HEK293 (cell line): ENCODE measurements at regions of chr4 and their contacts with region 1.

Region 1: GRCh38 chr4:77433418-77433733 is 172.2 kb upstream of the CXCL13 start:
- H3K4me3 ChIP-seq: no peak overlapping the region
- H3K27ac ChIP-seq: no peak overlapping the region
- H3K4me1 ChIP-seq: no peaks in the 10 kb centered on the region
- CTCF ChIP-seq: no peak

Region 2: GRCh38 chr4:77367638-77368037 is 65.7 kb before region 1 on chr4:
- CTCF ChIA-PET with region 1: interaction called, 38 read pairs
- POLR2A ChIA-PET with region 1: no interaction called
- H3K4me3 ChIP-seq: no peak overlapping the region
- H3K27ac ChIP-seq: no peak overlapping the region
- H3K4me1 ChIP-seq: no peaks in the 10 kb centered on the region
- CTCF ChIP-seq: no peak

Region 3: GRCh38 chr4:77385124-77385969 is 48.0 kb before region 1 on chr4:
- CTCF ChIA-PET with region 1: interaction called, 63 read pairs
- POLR2A ChIA-PET with region 1: no interaction called
- H3K4me3 ChIP-seq: no peak overlapping the region
- H3K27ac ChIP-seq: no peak overlapping the region
- H3K4me1 ChIP-seq: no peaks in the 10 kb centered on the region
- CTCF ChIP-seq: peak; percentile 58

Region 4: DNA sequence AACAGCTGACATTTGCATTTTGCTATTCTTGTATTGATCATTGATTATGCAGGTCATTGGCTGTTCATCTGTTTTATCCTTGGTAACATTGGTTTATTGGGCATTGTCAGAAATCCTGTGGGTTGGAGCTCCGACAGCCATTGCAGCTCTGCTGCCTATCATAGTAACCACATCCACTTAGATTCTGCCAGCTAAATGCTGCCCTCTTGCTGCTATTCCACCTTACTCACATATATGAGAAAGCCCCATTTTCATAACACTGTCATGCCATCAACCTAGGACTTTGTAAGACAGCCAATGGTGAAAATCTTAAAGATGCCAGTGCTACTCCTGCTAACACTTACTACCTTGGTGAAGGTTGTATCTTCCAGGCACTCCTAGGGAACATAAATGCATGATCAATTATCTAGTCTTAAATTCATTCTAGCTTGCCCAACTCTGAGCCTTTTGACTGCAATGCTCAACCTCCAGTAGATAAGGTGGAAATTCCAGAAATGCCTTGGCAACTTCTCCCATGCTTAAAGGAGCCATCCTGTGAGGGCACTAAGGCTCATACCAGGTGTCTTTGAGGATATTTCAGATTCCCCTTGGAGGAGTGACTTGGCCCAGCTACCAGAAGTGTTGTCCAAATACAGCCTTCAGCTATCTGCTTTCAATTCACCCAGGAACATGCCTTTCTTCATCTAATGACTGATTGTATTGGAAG is 14.9 kb before region 1 on chr4:
- CTCF ChIA-PET with region 1: interaction called, 11 read pairs
- POLR2A ChIA-PET with region 1: no interaction called
- H3K4me3 ChIP-seq: no peak overlapping the region
- H3K27ac ChIP-seq: no peak overlapping the region
- H3K4me1 ChIP-seq: 0 out of 2 replicates have a peak, but pooled peaks cover 4% of the 10 kb centered on the region
- CTCF ChIP-seq: no peak

Region 5: DNA sequence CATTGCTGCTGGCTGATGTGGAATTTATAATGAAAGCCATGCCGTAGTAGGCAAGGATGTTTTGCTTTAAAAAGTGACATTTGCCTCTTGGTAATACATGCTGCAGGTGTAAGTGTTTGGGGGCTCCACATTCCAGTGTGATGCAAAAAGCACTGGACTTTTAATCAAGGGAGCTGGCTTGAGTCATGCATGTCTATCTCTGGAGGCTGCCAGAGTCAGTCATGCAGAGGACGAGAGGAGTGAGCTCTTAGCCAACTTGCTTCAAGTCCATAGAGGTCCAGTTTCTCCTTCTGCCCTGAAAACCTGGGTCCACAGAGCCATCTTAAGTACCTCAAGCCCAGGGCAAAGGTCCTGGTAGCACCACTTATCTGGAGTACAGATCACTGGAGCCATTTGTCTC is 160.6 kb after region 1 on chr4:
- CTCF ChIA-PET with region 1: no interaction called
- POLR2A ChIA-PET with region 1: no interaction called
- H3K4me3 ChIP-seq: no peak overlapping the region
- H3K27ac ChIP-seq: no peak overlapping the region
- H3K4me1 ChIP-seq: no peaks in the 10 kb centered on the region
- CTCF ChIP-seq: no peak